ENCODE measurements at regions of chr18 and their contacts with region 1.

Region 1: GRCh38 chr18:13003466-13003896 is 12.3 kb downstream of the CEP192 start:
- DNase-seq: no peak
- H3K4me3 ChIP-seq: no peak overlapping the region
- CTCF ChIP-seq: peak; percentile 60

Region 2: GRCh38 chr18:13014232-13014631 is 10.8 kb after region 1 on chr18:
- CTCF ChIA-PET with region 1: interaction called, 18 read pairs
- POLR2A ChIA-PET with region 1: no interaction called
- DNase-seq: no peak
- H3K4me3 ChIP-seq: no peak overlapping the region
- CTCF ChIP-seq: no peak

Region 3: GRCh38 chr18:13387855-13388548 is 384.5 kb after region 1 on chr18:
- CTCF ChIA-PET with region 1: no interaction called
- POLR2A ChIA-PET with region 1: no interaction called
- DNase-seq: peak; percentile 19
- H3K4me3 ChIP-seq: no peak overlapping the region
- CTCF ChIP-seq: no peak